Right ventricle myocardium inferior (tissue), 1 donor: ENCODE measurements at regions of chr13 and their contacts with region 1.

Region 1: GRCh38 chr13:108332791-108333190 is 63.3 kb downstream of the TNFSF13B start:
- DNase-seq: no peak
- ATAC-seq: no peak

Region 2: GRCh38 chr13:107824635-107825034 is 508.2 kb before region 1 on chr13:
- intact Hi-C with region 1: no loop called
- DNase-seq: no peak
- ATAC-seq: no peak

Region 3: GRCh38 chr13:108407495-108407894 is 74.7 kb after region 1 on chr13:
- intact Hi-C with region 1: no loop called
- DNase-seq: no peak
- ATAC-seq: no peak

Region 4: DNA sequence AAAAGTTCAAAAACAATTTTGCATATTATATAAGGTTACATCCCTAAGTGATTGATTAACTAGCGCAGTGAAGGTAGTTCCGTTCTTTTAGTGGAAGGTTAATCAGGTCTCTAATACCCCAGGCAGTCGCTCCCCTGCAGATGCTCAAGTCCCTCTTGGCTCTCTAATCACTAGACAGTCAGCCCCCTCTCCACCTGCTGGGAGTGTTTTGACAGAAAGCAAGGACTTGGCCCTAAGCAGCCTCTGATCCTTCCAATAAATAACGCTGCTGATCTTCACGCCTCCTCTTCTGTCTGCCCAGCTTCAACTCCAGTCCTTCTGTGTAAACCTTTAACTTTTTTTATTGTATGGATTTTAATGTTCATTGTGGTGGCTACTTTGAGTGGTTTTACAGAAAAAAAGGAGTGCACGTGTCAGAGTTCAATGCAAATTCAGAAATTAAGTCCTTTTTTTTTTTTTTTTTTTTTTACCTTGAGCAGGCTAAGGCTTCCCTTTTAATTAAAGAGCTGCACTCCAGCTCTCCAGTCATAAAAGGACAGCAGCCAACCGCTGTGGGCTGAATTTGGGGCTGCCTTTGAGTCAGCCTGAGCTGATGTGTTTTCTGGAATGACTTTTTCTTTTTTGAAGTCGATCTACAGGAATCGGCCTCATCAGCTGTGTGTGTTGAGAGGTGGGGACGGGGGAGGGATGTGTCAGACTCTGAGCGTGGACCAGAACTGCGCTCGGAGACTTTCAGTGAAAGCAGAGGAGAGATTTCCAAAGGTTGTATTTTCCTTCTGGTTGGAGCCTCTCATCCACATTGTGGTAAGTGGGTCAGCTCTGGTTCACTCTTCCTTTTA is 262.9 kb after region 1 on chr13:
- intact Hi-C with region 1: loop called (anchors 10 kb)
- DNase-seq: no peak
- ATAC-seq: no peak